ENCODE measurements at regions of chr12 and their contacts with region 1.

Region 1: GRCh38 chr12:96445691-96446583 is 43.4 kb upstream of the CFAP54 start:
- DNase-seq: peak; percentile 33 to 92
- ATAC-seq: peak; percentile 89 to 96 (median 94)
- H3K4me3 ChIP-seq: no peak overlapping the region
- H3K4me3 Mint-ChIP-seq: peak overlapping the region; percentile 75
- H3K27ac ChIP-seq: peak overlapping the region; percentile 92
- H3K27ac Mint-ChIP-seq: peak overlapping the region; percentile 96 to 99
- H3K4me1 ChIP-seq: peaks cover 28% of the 10 kb centered on the region
- H3K4me1 Mint-ChIP-seq: peaks cover 35 to 38% of the 10 kb centered on the region in 2 donors
- H3K27me3 ChIP-seq: no peaks in the 10 kb centered on the region
- H3K27me3 Mint-ChIP-seq: no peaks in the 10 kb centered on the region
- CTCF ChIP-seq: no peak

Region 2: GRCh38 chr12:96054244-96054610 is 391.7 kb before region 1 on chr12:
- intact Hi-C with region 1: no loop called
- DNase-seq: no peak
- ATAC-seq: no peak
- H3K4me3 ChIP-seq: no peak overlapping the region
- H3K4me3 Mint-ChIP-seq: no peak overlapping the region
- H3K27ac ChIP-seq: no peak overlapping the region
- H3K27ac Mint-ChIP-seq: peak overlapping the region in 1 of 2 donors; percentile 2
- H3K4me1 ChIP-seq: peaks cover 5% of the 10 kb centered on the region
- H3K4me1 Mint-ChIP-seq: no peaks in the 10 kb centered on the region
- H3K27me3 ChIP-seq: no peaks in the 10 kb centered on the region
- H3K27me3 Mint-ChIP-seq: no peaks in the 10 kb centered on the region
- CTCF ChIP-seq: no peak

Region 3: DNA sequence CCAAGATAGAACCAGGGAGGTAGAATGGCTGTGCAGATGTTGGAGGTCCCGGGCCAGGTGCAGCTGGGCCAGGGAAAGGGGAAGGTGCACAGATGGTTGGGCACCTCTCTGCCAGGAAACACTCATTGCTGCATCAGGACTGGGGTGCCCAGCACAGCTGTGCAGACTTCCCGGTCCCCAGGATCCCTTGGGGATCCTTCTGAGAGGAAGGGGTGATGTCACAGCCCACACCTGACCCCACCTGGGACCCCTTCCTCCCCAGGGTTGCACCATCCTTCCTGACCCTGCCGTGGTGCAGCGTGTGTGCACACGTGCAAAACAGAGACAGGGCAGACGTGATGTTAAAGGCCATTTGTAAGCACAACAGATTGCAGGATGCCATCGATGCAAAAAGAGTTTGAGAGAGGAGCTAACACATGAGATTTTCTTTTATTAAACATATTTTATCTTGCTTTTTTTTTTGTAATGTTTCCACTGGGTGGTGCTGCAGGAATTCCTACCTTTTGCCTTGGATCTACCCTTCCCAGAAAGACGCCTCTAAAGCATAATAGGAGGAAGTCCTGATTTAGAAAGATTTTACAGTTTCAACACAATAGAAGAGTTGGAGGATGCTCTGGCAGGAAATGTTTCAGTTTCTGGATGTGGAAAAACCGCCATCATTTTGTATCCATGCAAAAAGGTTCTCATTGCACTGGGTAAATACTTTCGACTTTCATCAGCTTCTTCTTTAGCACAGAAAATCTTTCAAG is 237.0 kb before region 1 on chr12:
- intact Hi-C with region 1: no loop called
- DNase-seq: no peak
- ATAC-seq: no peak
- H3K4me3 ChIP-seq: no peak overlapping the region
- H3K4me3 Mint-ChIP-seq: no peak overlapping the region
- H3K27ac ChIP-seq: no peak overlapping the region
- H3K27ac Mint-ChIP-seq: no peak overlapping the region
- H3K4me1 ChIP-seq: peaks cover 45% of the 10 kb centered on the region
- H3K4me1 Mint-ChIP-seq: peaks cover 53 to 64% of the 10 kb centered on the region in 2 donors
- H3K27me3 ChIP-seq: no peaks in the 10 kb centered on the region
- H3K27me3 Mint-ChIP-seq: peaks cover 0 to 7% of the 10 kb centered on the region in 2 donors
- CTCF ChIP-seq: no peak

Region 4: GRCh38 chr12:96434107-96434506 is 11.8 kb before region 1 on chr12:
- intact Hi-C with region 1: loop called (anchors 1 kb)
- DNase-seq: peak; percentile 69 to 94
- ATAC-seq: peak; percentile 97 to 100 (median 97)
- H3K4me3 ChIP-seq: no peak overlapping the region
- H3K4me3 Mint-ChIP-seq: peak overlapping the region; percentile 36
- H3K27ac ChIP-seq: peak overlapping the region; percentile 79
- H3K27ac Mint-ChIP-seq: peak overlapping the region; percentile 68 to 86
- H3K4me1 ChIP-seq: peaks cover 22% of the 10 kb centered on the region
- H3K4me1 Mint-ChIP-seq: peaks cover 6 to 11% of the 10 kb centered on the region in 2 donors
- H3K27me3 ChIP-seq: no peaks in the 10 kb centered on the region
- H3K27me3 Mint-ChIP-seq: no peaks in the 10 kb centered on the region
- CTCF ChIP-seq: no peak

Measured in natural killer cell (primary cell).